AG04449 (cell line): ENCODE measurements at regions of chr6 and their contacts with region 1.

Region 1: DNA sequence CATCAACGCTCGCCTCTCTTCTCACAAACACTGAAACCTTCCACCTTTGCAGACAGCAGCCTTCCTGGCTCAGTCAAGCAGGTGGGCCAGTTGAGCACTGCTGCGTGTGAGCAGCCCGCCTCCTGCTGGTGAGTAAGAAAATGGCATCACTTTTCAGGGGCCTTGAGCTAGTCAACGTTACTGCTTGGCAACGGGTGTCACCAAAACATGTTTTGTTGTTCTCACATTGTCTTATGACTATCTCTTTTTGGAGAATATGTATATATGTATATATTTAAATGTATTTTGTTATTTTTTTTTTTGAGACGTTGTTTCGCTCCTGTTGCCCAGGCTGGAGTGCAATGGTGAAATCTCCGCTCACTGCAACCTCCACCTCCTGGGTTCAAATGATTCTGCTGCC is 97.0 kb upstream of the AGPAT4 start:
- DNase-seq: no peak
- H3K4me3 ChIP-seq: no peak overlapping the region
- CTCF ChIP-seq: peak; percentile 95

Region 2: GRCh38 chr6:160930547-160931377 is 440.1 kb before region 1 on chr6:
- CTCF ChIA-PET with region 1: interaction called, 315 read pairs
- POLR2A ChIA-PET with region 1: no interaction called
- DNase-seq: peak; percentile 38
- H3K4me3 ChIP-seq: peak overlapping the region; percentile 63
- CTCF ChIP-seq: peak; percentile 93

Region 3: DNA sequence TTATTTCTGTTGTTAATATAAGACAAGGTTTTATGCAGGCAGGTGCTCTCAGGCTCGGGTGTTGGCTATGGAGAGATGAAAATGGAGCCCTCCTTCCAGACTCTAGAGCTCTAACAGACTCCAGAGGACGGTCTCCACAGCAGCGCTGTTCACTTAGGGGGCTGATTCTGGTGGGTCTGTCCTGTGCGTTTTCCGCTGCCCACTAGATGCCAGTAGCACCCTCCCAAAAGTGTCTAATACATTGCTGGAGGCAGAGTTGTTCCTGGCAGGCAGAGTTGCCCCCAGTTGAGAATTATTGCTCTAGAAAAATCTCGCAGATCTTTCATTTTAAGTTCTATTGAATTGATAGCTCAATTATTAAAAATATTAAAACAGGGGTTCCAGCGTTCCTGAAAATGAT is 269.4 kb before region 1 on chr6:
- CTCF ChIA-PET with region 1: interaction called, 33 read pairs
- POLR2A ChIA-PET with region 1: no interaction called
- DNase-seq: no peak
- H3K4me3 ChIP-seq: no peak overlapping the region
- CTCF ChIP-seq: peak; percentile 37

Region 4: GRCh38 chr6:161143663-161144430 is 227.0 kb before region 1 on chr6:
- CTCF ChIA-PET with region 1: interaction called, 156 read pairs
- POLR2A ChIA-PET with region 1: no interaction called
- DNase-seq: no peak
- H3K4me3 ChIP-seq: no peak overlapping the region
- CTCF ChIP-seq: no peak

Region 5: DNA sequence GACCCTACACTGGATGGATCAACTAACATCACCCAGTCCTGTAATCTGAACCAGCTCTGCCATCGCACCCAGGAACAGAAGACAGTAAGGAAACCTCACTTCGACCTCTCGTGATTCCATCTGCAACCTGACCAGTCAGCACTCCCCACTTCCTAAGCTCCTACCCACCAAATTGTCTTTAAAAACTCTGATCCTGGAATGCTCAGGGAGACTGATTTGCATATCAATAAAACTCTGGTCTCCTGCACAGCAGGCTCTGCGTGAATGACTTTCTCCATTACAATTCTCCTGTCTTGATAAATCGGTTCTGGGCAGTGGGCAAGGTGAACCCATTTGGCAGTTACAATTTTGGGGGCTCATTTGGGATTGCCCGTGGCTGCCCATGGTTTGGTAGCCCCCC is 78.7 kb before region 1 on chr6:
- CTCF ChIA-PET with region 1: no interaction called
- POLR2A ChIA-PET with region 1: no interaction called
- DNase-seq: no peak
- H3K4me3 ChIP-seq: no peak overlapping the region
- CTCF ChIP-seq: no peak

Region 6: DNA sequence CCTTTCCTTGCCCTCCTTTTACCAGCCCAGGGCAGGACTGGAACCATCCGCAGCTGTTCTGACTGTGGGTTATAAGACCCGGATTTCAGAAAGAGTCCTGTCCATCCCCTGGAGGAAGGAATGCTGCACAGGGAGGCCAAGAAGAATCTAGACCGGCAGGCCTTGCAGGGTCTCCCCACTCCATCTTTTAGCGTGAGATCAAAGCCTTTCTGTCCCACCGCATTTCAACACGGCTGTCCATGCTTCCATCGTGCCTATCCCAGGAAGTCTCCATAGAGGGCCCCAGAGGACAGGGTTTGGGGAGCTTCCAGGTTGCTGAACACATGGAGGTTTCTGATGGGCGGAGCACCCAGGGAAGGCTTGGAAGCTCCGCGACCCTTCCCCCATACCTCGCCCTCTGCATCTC is 17.7 kb before region 1 on chr6:
- CTCF ChIA-PET with region 1: interaction called, 18 read pairs
- POLR2A ChIA-PET with region 1: no interaction called
- DNase-seq: no peak
- H3K4me3 ChIP-seq: no peak overlapping the region
- CTCF ChIP-seq: no peak